ENCODE measurements at regions of chr15 and their contacts with region 1.

Region 1: DNA sequence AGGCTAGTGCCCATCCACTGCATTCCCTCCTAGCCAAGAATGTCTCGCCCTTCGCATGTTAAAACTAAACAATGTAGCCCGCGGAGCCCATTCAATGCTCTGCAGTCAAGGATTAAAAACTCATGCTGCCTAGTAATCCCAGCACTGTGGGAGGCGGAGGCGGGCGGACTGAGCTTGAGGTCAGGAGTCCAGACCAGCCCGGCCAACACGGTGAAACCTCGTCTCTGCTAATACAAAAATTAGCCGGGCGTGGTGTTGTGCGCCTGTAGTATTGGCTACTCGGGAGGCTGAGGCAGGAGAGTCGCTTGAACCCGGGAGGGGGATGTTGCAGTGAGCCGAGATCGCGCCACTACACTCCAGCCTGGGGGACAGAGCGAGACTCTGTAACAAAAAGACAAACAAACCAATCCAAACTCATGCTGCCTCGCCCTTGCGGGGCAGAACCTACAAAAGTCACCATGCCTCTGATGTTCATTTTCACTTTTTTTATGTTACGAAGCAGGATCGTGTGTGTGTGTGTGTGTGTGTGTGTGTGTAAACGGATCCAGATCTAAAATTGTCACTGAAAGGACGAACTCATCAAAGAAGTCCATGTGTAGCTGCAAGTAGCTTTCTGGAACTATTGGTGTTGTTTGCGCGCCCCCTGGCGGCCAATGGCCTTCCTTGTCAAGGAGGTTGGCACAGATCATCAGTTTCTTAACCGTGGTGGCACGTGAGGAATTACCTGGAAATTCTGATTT is 54.8 kb upstream of the SPESP1 start:
- DNase-seq: peak; percentile 84
- ATAC-seq: peak; percentile 72
- H3K4me3 Mint-ChIP-seq: no peak overlapping the region
- H3K27ac Mint-ChIP-seq: no peak overlapping the region
- H3K4me1 Mint-ChIP-seq: peaks cover 4% of the 10 kb centered on the region
- H3K27me3 Mint-ChIP-seq: peaks cover 4% of the 10 kb centered on the region
- CTCF ChIP-seq: no peak

Region 2: GRCh38 chr15:68252925-68253534 is 622.5 kb before region 1 on chr15:
- CTCF ChIA-PET with region 1: no interaction called
- POLR2A ChIA-PET with region 1: no interaction called
- intact Hi-C with region 1: loop called (anchors 5 kb)
- DNase-seq: no peak
- ATAC-seq: peak; percentile 37
- H3K4me3 Mint-ChIP-seq: no peak overlapping the region
- H3K27ac Mint-ChIP-seq: no peak overlapping the region
- H3K4me1 Mint-ChIP-seq: peaks cover 4% of the 10 kb centered on the region
- H3K27me3 Mint-ChIP-seq: peaks cover 17% of the 10 kb centered on the region
- CTCF ChIP-seq: peak; percentile 34

Region 3: DNA sequence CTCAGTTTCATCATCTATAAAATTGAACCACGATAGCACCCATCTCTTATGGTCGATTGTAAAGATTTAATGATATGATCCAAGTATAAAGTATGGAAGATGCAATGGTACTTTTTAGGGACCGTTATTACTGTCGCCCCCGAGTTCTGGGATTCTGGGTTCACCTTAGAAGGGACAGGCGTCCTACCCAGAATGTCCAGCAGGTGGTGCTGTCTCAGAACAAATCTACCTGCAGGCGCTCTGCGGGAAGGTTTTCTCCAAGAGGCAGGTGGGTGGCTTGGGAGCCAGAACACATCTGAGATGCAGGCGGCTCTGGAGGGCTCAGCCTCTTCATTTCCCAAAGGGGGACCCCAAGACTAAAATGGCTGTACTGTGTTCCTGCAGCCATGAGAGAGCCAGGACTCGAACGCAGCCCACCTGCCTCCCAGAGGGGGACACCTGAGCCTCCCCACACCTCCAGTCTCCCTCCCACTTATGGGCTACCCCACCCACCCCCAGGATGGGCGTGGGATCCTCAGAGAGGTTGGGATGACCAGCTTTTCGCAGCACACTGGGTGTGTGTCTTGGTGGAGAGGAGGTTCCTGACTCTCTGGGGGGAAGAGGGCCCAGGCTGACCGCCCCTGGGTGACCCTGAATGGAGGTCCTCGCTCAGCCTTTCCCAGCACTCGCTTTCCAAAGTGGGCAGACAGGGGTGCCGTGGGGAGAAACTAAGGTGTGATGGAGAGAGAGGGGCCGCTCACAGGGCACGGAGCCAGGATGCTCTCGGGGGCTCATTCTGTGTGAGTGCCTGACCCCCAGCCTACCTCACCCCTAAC is 324.9 kb before region 1 on chr15:
- CTCF ChIA-PET with region 1: interaction called, 62 read pairs
- POLR2A ChIA-PET with region 1: no interaction called
- intact Hi-C with region 1: loop called (anchors 1 kb)
- DNase-seq: peak; percentile 68
- ATAC-seq: peak; percentile 67
- H3K4me3 Mint-ChIP-seq: no peak overlapping the region
- H3K27ac Mint-ChIP-seq: no peak overlapping the region
- H3K4me1 Mint-ChIP-seq: no peaks in the 10 kb centered on the region
- H3K27me3 Mint-ChIP-seq: peaks cover 22% of the 10 kb centered on the region
- CTCF ChIP-seq: peak; percentile 65

Region 4: GRCh38 chr15:68672781-68673205 is 202.8 kb before region 1 on chr15:
- CTCF ChIA-PET with region 1: interaction called, 30 read pairs
- POLR2A ChIA-PET with region 1: no interaction called
- intact Hi-C with region 1: loop called (anchors 1 kb)
- DNase-seq: no peak
- ATAC-seq: no peak
- H3K4me3 Mint-ChIP-seq: no peak overlapping the region
- H3K27ac Mint-ChIP-seq: no peak overlapping the region
- H3K4me1 Mint-ChIP-seq: peaks cover 15% of the 10 kb centered on the region
- H3K27me3 Mint-ChIP-seq: peaks cover 11% of the 10 kb centered on the region
- CTCF ChIP-seq: no peak

Region 5: DNA sequence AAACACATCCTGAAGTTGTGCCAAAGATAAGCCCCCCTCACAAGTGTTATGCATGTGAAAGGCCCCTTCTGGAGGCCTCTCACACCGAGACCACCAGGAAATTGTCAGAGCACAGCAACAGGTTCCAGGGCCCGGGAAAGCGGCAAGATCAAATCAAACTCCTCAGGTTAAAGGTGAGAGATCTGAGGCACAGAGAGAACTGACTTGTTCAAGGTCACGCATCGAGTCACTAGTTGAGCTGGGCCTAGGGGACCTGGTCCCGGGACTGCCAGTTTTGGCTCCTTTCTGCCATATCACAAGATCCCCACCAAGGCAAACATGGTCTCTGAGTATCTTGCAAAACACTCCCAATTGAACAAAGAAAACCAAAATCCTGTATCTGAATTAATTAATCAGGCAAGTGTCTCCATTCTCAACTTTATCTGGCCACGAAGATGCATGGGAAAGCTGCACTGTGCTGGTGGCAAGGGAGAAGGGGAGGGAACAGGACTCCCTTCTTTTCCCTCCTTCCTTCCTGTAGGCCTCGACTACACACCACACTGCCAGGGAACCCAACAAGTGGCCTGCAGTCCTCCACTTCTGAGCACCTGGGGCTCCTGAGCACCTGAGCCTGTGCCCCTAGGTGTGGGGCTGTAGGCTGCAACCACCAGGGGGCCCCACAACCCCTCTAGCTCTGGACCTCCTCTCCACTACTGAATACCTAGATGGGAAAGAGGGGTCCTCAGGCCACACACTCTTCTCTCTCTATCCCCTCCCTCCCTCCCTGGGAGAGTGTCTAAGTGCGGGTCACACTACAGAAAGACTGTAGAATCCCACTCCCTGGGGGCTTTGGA is 92.1 kb before region 1 on chr15:
- CTCF ChIA-PET with region 1: interaction called, 60 read pairs
- POLR2A ChIA-PET with region 1: interaction called, 6 read pairs
- intact Hi-C with region 1: loop called (anchors 1 kb)
- DNase-seq: peak; percentile 48
- ATAC-seq: peak; percentile 84
- H3K4me3 Mint-ChIP-seq: no peak overlapping the region
- H3K27ac Mint-ChIP-seq: no peak overlapping the region
- H3K4me1 Mint-ChIP-seq: peaks cover 31% of the 10 kb centered on the region
- H3K27me3 Mint-ChIP-seq: no peaks in the 10 kb centered on the region
- CTCF ChIP-seq: no peak

Region 6: DNA sequence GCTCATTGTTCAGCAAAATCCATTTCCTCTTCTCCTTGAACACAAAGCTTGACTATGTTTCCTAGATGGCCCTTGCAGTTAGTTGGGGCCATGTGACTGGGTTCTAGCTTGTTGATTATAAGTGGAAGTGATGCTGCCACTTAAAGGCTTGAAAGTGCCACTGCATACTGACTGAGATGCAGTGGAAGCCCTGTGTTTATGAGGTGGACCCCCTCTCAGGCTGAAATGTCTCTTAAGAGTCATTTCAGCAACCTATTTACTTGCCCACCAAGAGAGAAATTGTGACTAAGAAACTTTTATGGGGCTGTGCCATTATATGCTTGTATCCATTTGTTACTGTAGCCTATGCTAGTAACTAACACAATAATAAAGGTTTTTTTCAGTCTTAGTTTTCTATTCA is 46.5 kb before region 1 on chr15:
- CTCF ChIA-PET with region 1: interaction called, 8 read pairs
- POLR2A ChIA-PET with region 1: no interaction called
- intact Hi-C with region 1: loop called (anchors 2 kb)
- DNase-seq: no peak
- ATAC-seq: peak; percentile 84
- H3K4me3 Mint-ChIP-seq: no peak overlapping the region
- H3K27ac Mint-ChIP-seq: no peak overlapping the region
- H3K4me1 Mint-ChIP-seq: peaks cover 3% of the 10 kb centered on the region
- H3K27me3 Mint-ChIP-seq: peaks cover 4% of the 10 kb centered on the region
- CTCF ChIP-seq: no peak